GM10248 (cell line): ENCODE measurements at regions of chr18 and their contacts with region 1.

Region 1: DNA sequence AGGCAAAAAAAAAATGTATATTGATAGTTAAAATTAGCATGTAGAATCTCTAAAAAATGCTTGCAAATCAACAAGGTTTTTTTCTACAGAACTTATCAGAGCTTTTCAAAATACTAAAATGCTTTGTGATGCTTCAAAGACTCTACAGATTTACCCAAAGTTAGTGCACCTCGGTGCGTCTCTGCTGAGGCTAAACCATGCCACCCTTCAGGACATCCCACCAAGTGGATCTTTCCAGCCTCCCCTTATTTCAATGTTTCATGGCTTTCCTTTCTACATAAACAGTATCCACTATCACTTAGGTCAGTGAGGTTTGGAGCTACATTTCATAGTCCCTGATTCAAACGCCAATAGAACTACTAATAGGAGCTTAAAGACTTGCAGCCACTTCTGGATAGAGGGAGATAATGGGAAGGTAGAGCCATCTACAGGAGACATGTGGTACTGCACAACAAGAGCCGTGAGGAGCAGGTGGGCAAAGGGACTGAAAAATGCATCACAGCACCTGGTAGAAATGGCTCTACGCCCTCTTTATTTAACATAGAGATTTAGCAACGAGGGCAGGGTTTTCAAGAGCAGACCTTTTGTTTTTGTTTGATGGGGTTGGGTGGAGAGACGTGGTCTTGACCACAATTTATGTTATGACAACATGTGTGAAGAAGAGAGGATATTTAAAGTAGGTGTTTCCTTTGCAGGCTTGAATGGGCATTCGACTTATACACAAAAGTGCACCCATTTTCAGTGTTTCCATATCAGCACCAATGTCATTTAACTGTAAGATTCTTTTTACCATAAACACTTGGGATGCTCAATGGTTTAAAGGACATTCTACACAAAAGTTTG is 56.1 kb upstream of the SLC35G4 start:
- DNase-seq: peak; percentile 65
- CTCF ChIP-seq: peak; percentile 78

Region 2: DNA sequence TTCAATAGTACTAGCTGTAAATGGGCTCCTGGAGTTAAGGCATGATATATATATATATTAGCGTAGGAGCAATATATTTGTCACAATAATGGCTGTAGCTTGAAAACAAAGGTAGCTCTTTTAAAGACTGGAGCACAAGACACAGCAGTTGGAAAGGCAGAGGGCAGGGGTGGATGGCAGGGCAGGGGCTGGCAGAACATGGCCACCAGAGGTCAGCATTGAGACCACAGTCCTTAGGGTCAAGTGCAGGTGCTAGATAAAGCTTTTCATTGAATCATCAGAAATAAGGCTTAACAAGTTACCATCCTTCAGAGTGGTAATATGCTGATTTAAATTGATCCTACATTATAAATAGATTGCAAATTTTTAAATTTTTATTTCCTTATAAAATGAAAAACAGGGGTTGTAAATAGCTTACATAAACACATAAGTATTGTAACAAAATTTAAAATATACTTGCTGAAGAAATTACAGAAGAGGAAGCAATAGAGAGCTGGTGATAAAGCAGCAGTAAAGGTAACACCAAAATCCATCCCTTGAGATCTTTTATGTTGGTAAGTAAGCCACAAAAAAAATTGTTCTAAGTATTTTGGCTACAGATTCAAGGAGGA is 242.7 kb before region 1 on chr18:
- CTCF ChIA-PET with region 1: interaction called, 62 read pairs
- POLR2A ChIA-PET with region 1: no interaction called
- DNase-seq: peak; percentile 46
- CTCF ChIP-seq: peak; percentile 75

Region 3: DNA sequence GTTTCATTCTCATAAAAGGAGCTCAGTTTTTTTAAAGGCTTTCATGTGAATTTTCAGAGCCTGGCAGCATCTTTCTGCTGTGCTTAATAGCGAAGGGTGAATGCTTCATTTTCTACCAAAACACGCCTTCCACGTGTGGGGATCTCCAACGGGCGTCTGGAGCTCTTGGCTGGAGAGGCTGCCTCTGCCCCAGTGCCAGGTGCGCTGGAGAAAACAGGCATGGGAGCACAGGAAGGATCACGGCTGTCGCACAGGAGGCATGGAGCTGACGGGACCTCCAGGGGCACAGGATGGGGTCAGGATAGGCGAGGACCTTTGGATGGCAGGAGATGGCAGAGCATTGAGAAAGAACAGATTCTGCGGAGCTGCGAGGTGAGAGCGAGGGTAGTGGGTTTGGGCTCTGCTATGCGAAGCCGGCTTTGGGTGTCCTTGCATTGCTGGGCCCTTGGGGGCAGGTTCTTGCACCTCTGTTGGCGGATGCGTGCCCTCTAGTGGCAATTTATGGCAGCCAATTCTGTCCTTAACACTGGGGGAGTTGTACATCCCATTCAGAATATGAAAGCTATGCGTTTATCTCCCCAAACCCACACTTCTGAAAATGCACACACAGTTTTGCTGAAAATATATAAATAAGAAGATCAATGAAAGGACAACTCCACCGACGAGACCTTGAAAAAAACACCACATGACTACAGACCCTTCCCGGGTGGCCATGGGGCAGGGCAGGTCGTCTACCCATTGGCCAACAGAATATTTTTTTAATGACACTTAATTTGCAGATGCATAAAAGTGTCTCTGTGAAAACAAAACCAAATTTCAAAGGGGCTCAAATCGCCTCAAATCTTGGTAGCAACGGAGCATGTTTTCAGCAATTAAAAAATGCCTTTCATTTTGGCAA is 34.3 kb before region 1 on chr18:
- CTCF ChIA-PET with region 1: interaction called, 20 read pairs
- POLR2A ChIA-PET with region 1: no interaction called
- DNase-seq: peak; percentile 80
- CTCF ChIP-seq: peak; percentile 86

Region 4: DNA sequence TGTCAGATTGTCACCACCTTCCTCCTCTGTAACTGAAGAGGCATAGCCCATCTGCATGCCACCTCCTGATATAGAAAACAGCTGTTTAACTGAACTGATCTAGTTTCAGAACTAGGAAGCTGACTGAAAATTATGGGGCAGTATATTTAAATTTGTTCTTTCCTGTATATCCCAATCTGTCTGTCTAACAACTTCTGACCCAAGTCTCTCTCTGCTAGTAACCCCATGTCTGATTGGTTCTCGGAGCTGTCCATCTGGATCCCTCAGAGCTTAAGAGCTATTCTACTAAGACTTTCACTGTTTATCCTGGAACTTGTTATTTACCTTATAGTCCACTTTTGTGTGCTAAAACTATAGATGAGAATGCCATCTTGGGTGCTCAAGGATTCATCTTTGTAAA is 12.1 kb before region 1 on chr18:
- CTCF ChIA-PET with region 1: interaction called, 25 read pairs
- POLR2A ChIA-PET with region 1: no interaction called
- DNase-seq: no peak
- CTCF ChIP-seq: no peak

Region 5: GRCh38 chr18:11570769-11571168 is 17.4 kb after region 1 on chr18:
- CTCF ChIA-PET with region 1: interaction called, 26 read pairs
- POLR2A ChIA-PET with region 1: no interaction called
- DNase-seq: no peak
- CTCF ChIP-seq: no peak

Region 6: DNA sequence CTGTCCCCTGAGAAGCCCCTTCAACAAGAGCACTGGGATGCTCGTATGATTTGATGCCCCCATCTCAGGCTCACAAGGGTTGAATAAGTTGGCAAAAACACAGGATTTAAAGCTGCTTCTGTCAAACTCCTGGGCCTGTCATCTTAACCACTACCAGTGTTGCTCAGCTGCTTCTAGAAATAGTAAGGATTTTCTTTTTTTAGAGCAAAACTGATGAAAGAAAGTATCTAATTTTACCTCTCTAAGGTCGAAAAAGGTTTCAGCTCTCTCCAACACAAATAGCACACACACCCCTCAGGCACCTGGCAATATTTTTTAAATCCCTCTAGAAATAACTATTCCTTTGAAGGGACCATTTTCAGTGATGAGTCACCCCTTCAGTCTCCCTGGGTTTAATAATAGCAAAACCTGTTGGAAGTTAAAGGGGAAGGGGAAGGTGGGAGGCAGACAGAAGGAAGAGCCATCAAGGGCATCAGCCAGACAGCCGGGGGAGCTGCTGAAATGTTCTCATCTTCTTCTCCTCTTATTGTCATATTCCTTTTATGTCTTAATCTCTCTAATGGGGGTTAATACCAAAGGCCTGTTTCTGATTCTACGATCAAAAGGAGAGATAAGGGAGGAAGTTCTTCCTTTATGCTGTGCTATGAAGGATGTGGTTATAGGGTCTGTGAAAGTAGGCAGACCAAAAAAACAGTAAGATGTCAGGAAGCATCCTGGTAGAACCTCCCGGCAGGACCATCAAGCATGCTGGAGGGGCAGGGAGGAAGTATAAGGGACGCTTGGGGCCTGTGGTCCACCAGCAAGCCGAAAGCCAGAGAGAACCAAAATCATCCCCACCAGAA is 24.2 kb after region 1 on chr18:
- CTCF ChIA-PET with region 1: interaction called, 19 read pairs
- POLR2A ChIA-PET with region 1: no interaction called
- DNase-seq: no peak
- CTCF ChIP-seq: no peak

Region 7: GRCh38 chr18:11688989-11689668 is 135.8 kb after region 1 on chr18 and contains the start of gene GNAL:
- CTCF ChIA-PET with region 1: no interaction called
- POLR2A ChIA-PET with region 1: no interaction called
- DNase-seq: peak; percentile 77
- CTCF ChIP-seq: no peak